Activated naive CD4-positive, alpha-beta T cell treated with anti-CD3 and anti-CD28 coated beads for 36 hours (primary cell): ENCODE measurements at regions of chr4 and their contacts with region 1.

Region 1: DNA sequence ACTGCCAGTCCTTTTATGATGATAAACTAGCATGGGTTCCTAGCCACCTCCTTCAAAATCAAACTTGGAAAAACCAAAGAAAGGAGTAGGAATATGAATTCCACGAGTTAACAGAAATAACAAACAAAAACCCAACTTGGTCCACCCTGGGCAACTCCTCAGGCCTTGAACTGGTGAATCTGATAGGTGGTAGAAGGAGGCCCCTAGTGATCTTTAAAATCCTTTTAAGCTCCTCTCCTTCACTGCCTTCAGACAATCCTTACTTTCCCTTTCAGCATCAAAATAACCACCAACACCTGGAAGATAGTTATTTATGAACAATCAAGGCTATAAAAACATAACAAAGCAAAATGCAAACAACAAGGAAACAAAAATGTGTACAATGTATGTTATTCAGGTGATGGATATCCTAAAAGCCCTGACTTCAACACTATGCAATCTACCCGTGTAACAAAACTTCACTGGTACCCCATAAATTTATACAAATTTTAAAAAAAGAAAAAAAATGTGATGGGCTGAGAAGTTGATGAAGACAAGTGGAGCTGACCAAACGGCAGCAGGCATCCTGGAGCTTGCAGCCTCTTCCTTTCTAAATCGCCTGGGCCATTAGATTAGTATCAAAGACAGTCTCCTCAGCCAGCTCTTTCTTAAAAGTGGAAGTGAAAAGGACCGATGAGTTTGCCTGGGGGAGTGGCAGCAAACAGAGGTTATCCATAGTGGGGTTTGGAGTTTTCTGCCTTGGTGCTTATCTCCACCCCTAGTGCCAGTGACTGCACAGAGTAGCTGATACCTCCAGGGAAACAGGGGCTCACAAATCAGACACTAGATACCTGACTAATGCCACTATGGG is 179.6 kb downstream of the TMA16 start:
- DNase-seq: no peak
- H3K4me3 Mint-ChIP-seq: no peak overlapping the region
- H3K27ac Mint-ChIP-seq: no peak overlapping the region
- H3K4me1 Mint-ChIP-seq: peaks cover 13% of the 10 kb centered on the region
- H3K27me3 Mint-ChIP-seq: no peaks in the 10 kb centered on the region

Region 2: DNA sequence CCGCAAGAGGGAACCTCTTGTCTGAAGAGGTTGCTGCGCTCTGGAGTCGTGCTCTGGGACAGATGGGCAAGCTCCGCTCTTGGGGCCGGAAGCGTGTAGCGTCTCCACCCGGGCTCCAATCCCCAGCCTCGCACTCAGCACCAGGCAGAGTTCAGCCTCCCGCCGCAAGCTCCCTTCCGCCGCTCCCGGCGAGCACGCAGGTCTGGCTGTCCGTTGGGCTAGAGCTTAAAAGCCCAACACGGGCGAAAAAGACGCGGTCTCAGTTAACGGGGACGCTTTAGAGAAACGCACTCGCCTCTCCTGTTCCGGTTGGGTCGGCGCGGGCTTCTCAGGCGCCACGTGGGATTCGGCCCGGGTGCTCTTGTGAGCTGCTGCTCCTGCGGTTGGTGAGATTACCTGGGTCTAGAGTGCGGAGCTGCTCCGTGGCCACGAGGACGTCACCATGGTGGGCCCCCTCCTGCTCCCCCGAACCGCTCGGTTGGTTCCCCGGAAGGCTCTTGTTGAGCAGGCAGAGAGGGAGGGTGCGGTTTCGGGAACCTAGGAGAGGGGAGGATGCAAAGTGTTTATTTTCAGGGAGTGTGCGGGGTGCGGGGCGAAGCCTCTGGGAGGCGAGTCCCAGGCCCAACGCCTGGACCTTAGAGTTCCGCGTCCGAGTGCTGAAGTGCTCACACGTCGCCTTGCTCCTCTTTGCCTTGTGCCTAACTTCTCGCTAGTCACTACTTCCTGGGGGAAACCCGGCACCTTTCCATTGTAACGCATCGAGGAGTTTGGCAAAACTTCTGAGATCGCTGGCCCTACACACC is 179.5 kb before region 1 on chr4 and contains the start of gene TMA16:
- CTCF ChIA-PET with region 1: no interaction called
- intact Hi-C with region 1: loop called (anchors 5 kb)
- DNase-seq: peak; percentile 88
- H3K4me3 Mint-ChIP-seq: peak within 1 kb of the TSS; percentile 83
- H3K27ac Mint-ChIP-seq: peak within 1 kb of the TSS; percentile 99
- H3K4me1 Mint-ChIP-seq: peaks cover 26% of the 10 kb centered on the region
- H3K27me3 Mint-ChIP-seq: no peaks in the 10 kb centered on the region
- total RNA-seq, gene TMA16: 45.1 to 46.7 TPM